H1 (cell line): ENCODE measurements at regions of chr11 and their contacts with region 1.

Region 1: GRCh38 chr11:118488480-118489109 is 38.7 kb upstream of the TTC36 start:
- DNase-seq: peak; percentile 23 to 82
- H3K4me3 ChIP-seq: no peak overlapping the region
- H3K27ac ChIP-seq: no peak overlapping the region
- H3K4me1 ChIP-seq: no peaks in the 10 kb centered on the region
- H3K27me3 ChIP-seq: no peaks in the 10 kb centered on the region
- CTCF ChIP-seq: peak; percentile 65 to 78 (median 76)
- EP300 ChIP-seq: no peak
- POLR2A ChIP-seq: no peak
- RAD21 ChIP-seq: peak; percentile 83 to 85

Region 2: DNA sequence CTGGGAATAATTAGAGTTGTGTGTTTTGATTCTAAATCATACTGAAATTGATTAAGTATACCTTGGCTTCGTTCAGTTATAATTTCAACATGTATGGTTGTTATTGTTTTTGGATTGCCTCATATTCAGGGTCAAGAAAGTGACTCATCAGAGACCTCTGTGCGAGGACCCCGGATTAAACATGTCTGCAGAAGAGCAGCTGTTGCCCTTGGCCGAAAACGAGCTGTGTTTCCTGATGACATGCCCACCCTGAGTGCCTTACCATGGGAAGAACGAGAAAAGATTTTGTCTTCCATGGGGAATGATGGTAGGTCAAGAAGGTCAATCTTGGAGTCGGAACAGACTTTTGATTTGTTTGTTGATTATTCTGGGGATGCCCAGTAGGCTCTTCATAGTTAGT is 11.9 kb before region 1 on chr11:
- CTCF ChIA-PET with region 1: interaction called, 10 read pairs
- POLR2A ChIA-PET with region 1: no interaction called
- DNase-seq: no peak
- H3K4me3 ChIP-seq: no peak overlapping the region
- H3K27ac ChIP-seq: no peak overlapping the region
- H3K4me1 ChIP-seq: no peaks in the 10 kb centered on the region
- H3K27me3 ChIP-seq: no peaks in the 10 kb centered on the region
- CTCF ChIP-seq: no peak
- EP300 ChIP-seq: no peak
- POLR2A ChIP-seq: no peak
- RAD21 ChIP-seq: no peak

Region 3: DNA sequence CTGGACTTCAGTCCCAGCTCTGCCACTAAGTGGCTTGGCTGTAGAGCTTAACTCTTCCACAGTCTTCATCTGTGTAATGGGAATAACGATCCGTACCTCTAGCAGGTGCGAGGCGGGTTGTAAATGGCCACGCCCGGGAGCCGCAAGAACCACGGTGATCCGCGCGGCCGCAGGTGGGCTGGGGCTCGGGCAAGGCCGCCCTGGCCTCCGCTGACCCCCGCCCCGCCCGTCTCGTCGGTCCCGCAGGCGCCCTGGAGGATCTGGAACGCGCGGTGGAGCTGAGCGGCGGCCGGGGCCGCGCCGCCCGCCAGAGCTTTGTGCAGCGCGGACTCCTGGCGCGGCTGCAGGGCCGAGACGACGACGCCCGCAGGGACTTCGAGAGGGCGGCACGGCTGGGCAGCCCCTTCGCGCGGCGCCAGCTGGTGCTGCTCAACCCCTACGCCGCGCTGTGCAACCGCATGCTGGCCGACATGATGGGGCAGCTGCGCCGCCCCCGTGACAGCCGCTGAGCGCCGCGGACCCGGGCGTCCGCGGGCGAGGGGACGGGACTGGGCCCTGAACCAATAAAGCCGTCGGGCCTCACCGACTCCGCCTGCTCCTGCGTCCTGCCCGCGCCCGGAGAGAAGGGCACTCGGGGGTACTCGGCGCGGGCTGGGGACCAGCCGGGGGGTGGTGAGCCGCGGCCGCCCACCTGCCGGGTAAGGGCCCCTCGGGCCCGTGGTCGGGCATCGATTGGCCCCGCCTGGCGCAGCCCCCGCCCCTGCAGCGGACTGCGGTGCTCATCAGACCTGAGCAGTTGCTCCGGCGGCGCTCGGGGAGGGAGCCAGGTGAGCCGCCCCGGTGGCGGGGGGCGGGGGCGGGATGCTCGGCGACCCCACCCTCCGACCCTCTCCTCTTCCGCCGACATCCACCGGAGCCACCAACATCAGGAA is 42.1 kb after region 1 on chr11 and contains the start of gene TMEM25:
- CTCF ChIA-PET with region 1: no interaction called
- POLR2A ChIA-PET with region 1: no interaction called
- DNase-seq: peak in 1 of 2 experiments; percentile 90
- H3K4me3 ChIP-seq: peak within 1 kb of the TSS; percentile 83 to 95 (median 94)
- H3K27ac ChIP-seq: no peak within 1 kb of the TSS; the same call in 1 of the 2 replicates
- H3K4me1 ChIP-seq: peaks cover 0 to 14% (median 8%) of the 10 kb centered on the region in 4 experiments; a peak in 5 of 7 replicates
- H3K27me3 ChIP-seq: no peaks in the 10 kb centered on the region; a peak in 2 of 7 replicates
- CTCF ChIP-seq: no peak
- EP300 ChIP-seq: no peak
- POLR2A ChIP-seq: no peak; a peak in 2 of 3 replicates
- RAD21 ChIP-seq: no peak
- total RNA-seq, gene TMEM25: 13.7 and 18.3 TPM in 2 replicates